H1 (cell line): ENCODE measurements at regions of chr11 and their contacts with region 1.

Region 1: GRCh38 chr11:57530596-57531507 is at the start of gene TIMM10:
- DNase-seq: peak; percentile 87 to 98
- H3K4me3 ChIP-seq: peak within 1 kb of the TSS; percentile 88 to 99 (median 96)
- H3K27ac ChIP-seq: peak within 1 kb of the TSS; percentile 49
- H3K4me1 ChIP-seq: peaks cover 0 to 7% (median 3%) of the 10 kb centered on the region in 4 experiments; a peak in 4 of 7 replicates
- H3K27me3 ChIP-seq: no peaks in the 10 kb centered on the region
- CTCF ChIP-seq: no peak
- EP300 ChIP-seq: peak in 1 of 2 experiments; percentile 26; a peak in 1 of 3 replicates
- POLR2A ChIP-seq: peak in 1 of 2 experiments; percentile 65; a peak in 1 of 3 replicates
- RAD21 ChIP-seq: peak in 1 of 2 experiments; percentile 13; a peak in 1 of 4 replicates
- total RNA-seq, gene TIMM10: 109 and 117 TPM in 2 replicates

Region 2: GRCh38 chr11:57345555-57346211 is 185.2 kb before region 1 on chr11:
- CTCF ChIA-PET with region 1: interaction called, 10 read pairs
- POLR2A ChIA-PET with region 1: no interaction called
- DNase-seq: peak in 1 of 2 experiments; percentile 85
- H3K4me3 ChIP-seq: no peak overlapping the region
- H3K27ac ChIP-seq: no peak overlapping the region
- H3K4me1 ChIP-seq: peaks cover 5 to 15% (median 8%) of the 10 kb centered on the region in 4 experiments; a peak in 6 of 7 replicates
- H3K27me3 ChIP-seq: peaks cover 0 to 6% (median 4%) of the 10 kb centered on the region in 4 experiments; a peak in 4 of 7 replicates
- CTCF ChIP-seq: peak; percentile 61 to 76 (median 73)
- EP300 ChIP-seq: no peak
- POLR2A ChIP-seq: no peak
- RAD21 ChIP-seq: peak; percentile 84 to 89

Region 3: DNA sequence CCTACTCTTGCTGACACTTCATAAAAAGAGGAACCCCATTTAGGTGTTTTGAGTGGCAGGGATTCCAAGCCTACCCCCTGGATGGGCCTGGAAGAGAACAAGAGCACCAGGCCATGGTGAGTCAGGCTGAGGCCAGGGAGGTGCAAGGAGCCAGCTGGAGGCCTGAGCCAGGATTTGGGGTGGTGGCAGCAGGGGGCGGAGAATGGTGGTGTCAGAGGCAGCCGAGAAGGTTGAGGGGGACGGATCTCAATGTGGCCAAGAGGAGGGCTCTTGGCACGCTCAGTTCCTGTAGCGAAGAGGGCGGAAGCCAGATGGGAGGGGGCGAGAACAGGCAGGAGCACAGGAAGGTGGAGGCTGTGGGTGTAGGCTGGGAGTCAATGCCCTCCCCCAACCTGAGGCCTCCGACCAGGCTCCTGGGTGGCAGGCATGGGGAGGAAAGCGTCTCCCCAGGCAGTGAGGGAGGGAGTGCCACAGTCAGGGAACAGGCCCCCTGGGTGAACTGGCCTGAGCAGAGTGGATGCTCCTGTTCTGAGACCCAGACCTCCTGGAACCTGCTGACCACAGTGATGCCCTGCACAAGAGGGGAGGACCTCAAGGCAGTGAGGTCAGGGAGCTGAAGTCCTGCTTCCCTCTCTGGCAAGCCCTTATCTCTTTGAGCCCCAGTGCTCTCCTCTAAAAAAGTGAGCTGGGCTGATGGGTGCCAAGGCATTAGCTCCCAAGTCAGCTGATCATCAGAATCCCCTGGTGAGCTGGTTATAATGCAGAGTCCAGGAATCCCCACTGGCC is 56.6 kb before region 1 on chr11:
- CTCF ChIA-PET with region 1: interaction called, 1,146 read pairs
- POLR2A ChIA-PET with region 1: interaction called, 6 read pairs
- DNase-seq: no peak
- H3K4me3 ChIP-seq: no peak overlapping the region
- H3K27ac ChIP-seq: no peak overlapping the region
- H3K4me1 ChIP-seq: peaks cover 4 to 25% (median 13%) of the 10 kb centered on the region in 4 experiments
- H3K27me3 ChIP-seq: peaks cover 0 to 35% (median 22%) of the 10 kb centered on the region in 4 experiments; a peak in 6 of 7 replicates
- CTCF ChIP-seq: no peak
- EP300 ChIP-seq: no peak
- POLR2A ChIP-seq: no peak
- RAD21 ChIP-seq: no peak

Region 4: DNA sequence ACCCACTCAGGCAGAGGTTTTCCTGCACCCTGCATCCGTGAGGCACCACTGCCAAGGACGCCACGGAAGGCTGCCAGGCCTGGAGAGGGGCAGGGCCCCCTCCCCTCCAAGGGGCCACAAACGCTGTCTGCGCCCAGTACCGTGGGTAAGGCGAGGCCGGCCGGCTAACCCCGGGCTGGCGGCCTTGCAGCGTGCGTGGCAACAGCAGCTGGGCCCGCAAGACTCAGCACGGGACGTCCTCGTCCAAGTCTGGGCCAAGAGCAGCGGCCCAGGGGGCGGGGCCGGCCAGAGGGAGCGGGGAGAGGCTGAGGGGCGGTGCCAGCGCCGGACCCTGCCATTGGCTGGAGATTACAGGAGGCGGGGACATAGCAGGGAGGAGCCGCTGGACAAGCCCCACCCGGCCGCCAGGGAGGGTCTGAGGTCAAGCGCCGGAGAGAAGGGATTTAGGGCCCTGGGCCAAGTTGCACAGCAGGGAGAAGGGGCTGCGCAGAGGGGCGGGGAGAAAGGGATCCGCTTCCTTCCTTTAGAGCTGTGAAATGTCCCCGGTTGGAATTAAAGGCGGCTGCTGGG is 31.4 kb before region 1 on chr11:
- CTCF ChIA-PET with region 1: interaction called, 1,146 read pairs
- POLR2A ChIA-PET with region 1: interaction called, 40 read pairs
- DNase-seq: peak; percentile 89 to 98
- H3K4me3 ChIP-seq: peak overlapping the region; percentile 5 to 48 (median 36); a peak in 5 of 8 replicates
- H3K27ac ChIP-seq: no peak overlapping the region
- H3K4me1 ChIP-seq: peaks cover 7 to 18% (median 14%) of the 10 kb centered on the region in 4 experiments
- H3K27me3 ChIP-seq: no peaks in the 10 kb centered on the region
- CTCF ChIP-seq: no peak
- EP300 ChIP-seq: no peak
- POLR2A ChIP-seq: peak in 1 of 2 experiments; percentile 24; a peak in 2 of 3 replicates
- RAD21 ChIP-seq: peak; percentile 1 to 6; a peak in 2 of 4 replicates

Region 5: DNA sequence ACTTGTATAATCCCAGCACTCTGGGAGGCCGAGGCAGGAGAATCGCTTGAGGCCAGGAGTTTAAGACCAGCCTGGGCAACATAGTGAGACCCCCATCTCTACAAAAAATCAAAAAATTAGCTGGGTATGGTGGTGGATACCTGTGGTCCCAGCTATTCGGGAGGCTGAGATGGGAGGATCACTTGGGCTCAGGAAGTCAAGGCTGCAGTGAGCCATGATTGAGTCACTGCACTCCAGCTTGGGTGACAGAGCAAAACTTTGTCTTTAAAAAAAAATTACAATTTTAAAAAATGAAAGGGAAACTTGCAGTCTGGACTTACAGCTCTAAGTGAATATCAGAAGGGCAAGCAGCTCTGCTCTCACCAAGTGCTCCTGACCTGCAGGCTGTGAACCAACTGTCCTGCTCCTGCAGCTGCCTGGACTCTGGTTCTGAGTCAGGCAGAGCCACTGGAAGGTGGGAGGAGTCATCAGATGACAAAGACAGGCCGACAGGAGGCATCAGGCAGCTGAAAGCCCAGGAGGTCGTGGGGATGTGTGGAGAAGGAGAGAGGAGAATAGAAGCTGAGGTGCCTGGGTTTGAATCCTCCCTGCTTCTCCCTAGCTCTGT is 16.1 kb after region 1 on chr11:
- CTCF ChIA-PET with region 1: interaction called, 21 read pairs
- POLR2A ChIA-PET with region 1: interaction called, 5 read pairs
- DNase-seq: no peak
- H3K4me3 ChIP-seq: no peak overlapping the region
- H3K27ac ChIP-seq: no peak overlapping the region
- H3K4me1 ChIP-seq: peaks cover 0 to 15% (median 11%) of the 10 kb centered on the region in 4 experiments; a peak in 6 of 7 replicates
- H3K27me3 ChIP-seq: no peaks in the 10 kb centered on the region; a peak in 2 of 7 replicates
- CTCF ChIP-seq: peak in 2 of 3 experiments; percentile 19 to 21; a peak in 2 of 4 replicates
- EP300 ChIP-seq: no peak
- POLR2A ChIP-seq: no peak
- RAD21 ChIP-seq: peak; percentile 1 to 17; a peak in 1 of 4 replicates

Region 6: DNA sequence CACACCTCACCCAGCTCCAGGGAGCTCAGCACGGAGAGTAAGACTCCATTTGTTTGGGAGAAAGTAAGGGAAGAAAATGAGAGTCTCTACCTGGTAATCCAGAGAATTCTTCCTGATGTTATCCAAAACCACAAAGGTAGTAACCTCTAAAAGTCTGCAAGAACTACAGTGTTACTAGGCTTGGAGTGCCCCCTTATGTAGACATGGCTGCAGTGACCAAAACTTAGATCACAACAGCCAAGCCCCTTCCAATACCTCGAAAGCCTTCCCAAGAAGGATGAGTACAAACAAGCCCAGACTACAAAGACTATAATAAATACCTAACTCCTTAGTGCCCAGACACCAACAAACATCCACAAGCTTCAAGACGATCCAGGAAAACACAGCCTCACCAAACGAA is 31.7 kb after region 1 on chr11:
- CTCF ChIA-PET with region 1: interaction called, 41 read pairs
- POLR2A ChIA-PET with region 1: interaction called, 3 read pairs
- DNase-seq: no peak
- H3K4me3 ChIP-seq: no peak overlapping the region
- H3K27ac ChIP-seq: no peak overlapping the region
- H3K4me1 ChIP-seq: peaks cover 4 to 7% (median 4%) of the 10 kb centered on the region in 4 experiments; a peak in 6 of 7 replicates
- H3K27me3 ChIP-seq: no peaks in the 10 kb centered on the region
- CTCF ChIP-seq: peak in 2 of 3 experiments; percentile 54 to 57; a peak in 3 of 4 replicates
- EP300 ChIP-seq: no peak
- POLR2A ChIP-seq: no peak
- RAD21 ChIP-seq: peak; percentile 73 to 79